Esophagus muscularis mucosa (tissue), 4 donors: ENCODE measurements at regions of chr12 and their contacts with region 1.

Region 1: DNA sequence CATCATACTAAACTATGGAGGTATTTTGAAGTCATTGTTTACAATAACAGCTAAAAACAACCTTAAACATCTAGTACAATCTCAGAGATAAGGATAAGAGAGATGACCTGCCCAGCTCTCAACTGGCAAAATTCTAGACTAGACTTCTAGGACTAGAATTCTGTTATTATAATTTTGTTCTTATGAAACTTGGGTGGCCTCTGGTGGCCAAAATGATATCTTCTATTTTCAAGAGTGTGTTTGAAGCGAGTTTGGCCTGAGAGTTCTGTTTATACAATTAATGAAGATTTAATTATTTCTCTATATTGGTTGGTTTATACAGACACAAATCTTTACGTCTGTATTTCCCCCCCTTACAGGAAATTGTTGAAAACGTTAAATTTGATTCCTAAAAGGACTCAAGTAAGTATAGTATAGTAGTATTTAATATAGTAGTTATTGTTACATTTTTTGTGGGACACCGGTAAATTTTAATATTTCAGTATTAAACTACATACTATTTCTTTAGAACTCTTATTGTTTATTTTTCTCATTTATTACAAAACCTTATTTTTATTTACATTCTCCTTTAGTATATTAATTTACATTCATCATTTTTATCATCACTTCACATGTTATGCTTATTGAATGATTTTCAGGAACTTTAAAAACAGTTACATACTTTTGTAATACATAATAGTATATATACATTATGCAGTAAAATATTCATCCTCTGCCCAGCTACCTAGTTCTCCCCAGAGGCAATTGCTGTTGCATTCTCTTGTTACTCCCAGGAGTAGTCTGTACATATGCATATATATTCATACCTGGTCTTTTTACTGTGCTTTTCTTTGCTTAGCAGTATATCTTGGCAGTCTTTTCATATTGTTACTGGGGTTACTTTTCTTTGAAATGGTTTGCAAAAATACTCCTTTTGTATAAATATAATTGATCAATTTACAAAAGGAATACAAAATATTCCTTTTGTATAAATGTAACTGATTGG is 6.6 kb downstream of the PPHLN1 start:
- DNase-seq: no peak
- H3K4me3 ChIP-seq: no peak overlapping the region
- H3K27ac ChIP-seq: no peak overlapping the region
- H3K4me1 ChIP-seq: peaks cover 4 to 33% (median 22%) of the 10 kb centered on the region in 4 donors
- H3K27me3 ChIP-seq: no peaks in the 10 kb centered on the region
- CTCF ChIP-seq: peak; percentile 56 to 66 (median 62)
- EP300 ChIP-seq: no peak
- POLR2A ChIP-seq: no peak

Region 2: GRCh38 chr12:42129595-42130204 is 202.9 kb before region 1 on chr12:
- intact Hi-C with region 1: loop called (anchors 2 kb)
- DNase-seq: no peak
- H3K4me3 ChIP-seq: no peak overlapping the region
- H3K27ac ChIP-seq: no peak overlapping the region
- H3K4me1 ChIP-seq: peaks cover 9 to 20% (median 14%) of the 10 kb centered on the region in 4 donors
- H3K27me3 ChIP-seq: no peaks in the 10 kb centered on the region
- CTCF ChIP-seq: peak; percentile 80 to 84 (median 82)
- EP300 ChIP-seq: no peak
- POLR2A ChIP-seq: no peak